ENCODE measurements at regions of chr7 and their contacts with region 1.

Region 1: DNA sequence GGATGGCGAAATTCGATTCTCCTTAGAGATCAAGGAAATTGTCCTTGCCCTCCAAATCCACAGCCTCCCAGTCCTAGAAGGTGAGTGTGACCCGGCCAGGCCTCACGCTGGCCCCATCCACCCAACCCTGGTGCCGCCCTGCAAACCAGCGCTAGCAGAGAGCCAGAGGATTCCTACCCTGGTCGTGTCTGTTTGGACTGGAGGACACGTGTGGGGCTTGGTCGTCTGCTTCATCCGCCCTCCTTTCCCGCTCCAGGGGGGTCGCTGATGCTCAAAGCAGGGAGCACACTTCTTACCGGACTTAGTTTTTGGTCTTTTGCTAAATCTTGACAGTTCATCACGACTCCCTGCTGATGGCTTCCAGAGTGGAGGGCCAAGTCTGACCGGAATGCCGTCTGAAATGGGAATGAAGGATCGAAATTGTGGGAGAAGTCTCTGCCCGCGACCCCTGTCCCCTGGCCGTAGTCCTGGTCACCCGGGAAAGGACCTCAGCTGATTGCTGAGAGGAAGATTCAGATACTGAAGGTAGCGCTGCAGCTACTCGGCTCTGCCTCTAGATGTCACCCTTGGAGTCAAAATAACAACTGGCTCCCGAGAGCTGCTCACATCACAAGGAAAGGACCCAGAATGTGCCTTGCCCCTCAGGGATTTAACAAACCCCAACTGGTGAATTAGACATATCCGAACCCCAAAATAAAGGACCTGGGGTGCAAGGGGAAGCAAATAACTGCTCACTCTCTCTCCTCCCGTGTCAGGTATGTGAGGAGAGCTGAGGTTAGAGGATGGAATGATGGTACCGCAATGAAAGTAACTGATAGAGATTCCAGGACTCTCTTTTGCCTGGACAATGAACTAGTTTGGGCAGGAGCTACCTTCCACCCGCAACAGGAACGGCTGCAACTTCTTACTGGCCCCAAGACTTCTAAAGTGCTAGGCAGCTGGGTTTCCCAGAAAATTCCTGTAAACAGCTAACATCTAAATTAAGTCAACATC is 23.5 kb upstream of the ORC5 start:
- DNase-seq: peak; percentile 61
- H3K4me3 ChIP-seq: no peak overlapping the region
- H3K4me3 Mint-ChIP-seq: no peak overlapping the region
- H3K27ac Mint-ChIP-seq: no peak overlapping the region
- H3K4me1 ChIP-seq: peaks cover 15% of the 10 kb centered on the region
- H3K4me1 Mint-ChIP-seq: peaks cover 16% of the 10 kb centered on the region
- H3K27me3 ChIP-seq: no peaks in the 10 kb centered on the region
- H3K27me3 Mint-ChIP-seq: no peaks in the 10 kb centered on the region
- CTCF ChIP-seq: peak; percentile 84 to 91

Region 2: DNA sequence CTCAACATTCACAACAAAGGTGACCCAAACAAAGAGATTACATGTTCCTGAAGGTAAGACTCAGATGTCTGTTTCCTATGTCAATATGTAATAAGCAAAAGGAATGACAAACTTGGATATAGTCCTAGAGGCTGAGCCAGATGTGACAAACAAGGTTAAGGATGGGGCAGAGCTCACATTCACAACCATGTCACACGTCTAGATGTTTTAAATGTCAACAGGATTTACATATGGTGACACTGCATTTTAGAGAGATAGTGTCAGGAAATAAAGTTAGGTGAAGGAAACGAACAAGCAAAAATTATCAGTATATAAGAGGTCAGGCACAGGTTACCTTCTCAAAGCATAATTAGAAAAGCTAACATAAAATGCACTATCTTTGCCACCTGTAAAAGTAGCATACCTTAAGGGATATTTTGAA is 250.3 kb before region 1 on chr7:
- CTCF ChIA-PET with region 1: no interaction called
- POLR2A ChIA-PET with region 1: no interaction called
- intact Hi-C with region 1: no loop called
- DNase-seq: no peak
- H3K4me3 ChIP-seq: no peak overlapping the region
- H3K4me3 Mint-ChIP-seq: no peak overlapping the region
- H3K27ac Mint-ChIP-seq: no peak overlapping the region
- H3K4me1 ChIP-seq: no peaks in the 10 kb centered on the region
- H3K4me1 Mint-ChIP-seq: no peaks in the 10 kb centered on the region
- H3K27me3 ChIP-seq: no peaks in the 10 kb centered on the region
- H3K27me3 Mint-ChIP-seq: no peaks in the 10 kb centered on the region
- CTCF ChIP-seq: no peak

Region 3: GRCh38 chr7:104252404-104253134 is 21.2 kb after region 1 on chr7:
- CTCF ChIA-PET with region 1: interaction called, 24 read pairs
- POLR2A ChIA-PET with region 1: no interaction called
- intact Hi-C with region 1: loop called (anchors 2 kb)
- DNase-seq: peak in 1 of 2 experiments; percentile 52
- H3K4me3 ChIP-seq: no peak overlapping the region
- H3K4me3 Mint-ChIP-seq: no peak overlapping the region
- H3K27ac Mint-ChIP-seq: no peak overlapping the region
- H3K4me1 ChIP-seq: no peaks in the 10 kb centered on the region
- H3K4me1 Mint-ChIP-seq: no peaks in the 10 kb centered on the region
- H3K27me3 ChIP-seq: no peaks in the 10 kb centered on the region
- H3K27me3 Mint-ChIP-seq: peaks cover 7% of the 10 kb centered on the region
- CTCF ChIP-seq: peak; percentile 40 to 53

Region 4: GRCh38 chr7:104267701-104268368 is 36.5 kb after region 1 on chr7:
- CTCF ChIA-PET with region 1: interaction called, 10 read pairs
- POLR2A ChIA-PET with region 1: no interaction called
- intact Hi-C with region 1: no loop called
- DNase-seq: no peak
- H3K4me3 ChIP-seq: no peak overlapping the region
- H3K4me3 Mint-ChIP-seq: no peak overlapping the region
- H3K27ac Mint-ChIP-seq: no peak overlapping the region
- H3K4me1 ChIP-seq: no peaks in the 10 kb centered on the region
- H3K4me1 Mint-ChIP-seq: no peaks in the 10 kb centered on the region
- H3K27me3 ChIP-seq: no peaks in the 10 kb centered on the region
- H3K27me3 Mint-ChIP-seq: peaks cover 9% of the 10 kb centered on the region
- CTCF ChIP-seq: peak in 1 of 2 experiments; percentile 19

Region 5: GRCh38 chr7:104415700-104416099 is 184.3 kb after region 1 on chr7:
- CTCF ChIA-PET with region 1: interaction called, 3 read pairs
- POLR2A ChIA-PET with region 1: no interaction called
- intact Hi-C with region 1: loop called (anchors 2 kb)
- DNase-seq: peak in 1 of 2 experiments; percentile 14
- H3K4me3 ChIP-seq: no peak overlapping the region
- H3K4me3 Mint-ChIP-seq: no peak overlapping the region
- H3K27ac Mint-ChIP-seq: no peak overlapping the region
- H3K4me1 ChIP-seq: no peaks in the 10 kb centered on the region
- H3K4me1 Mint-ChIP-seq: no peaks in the 10 kb centered on the region
- H3K27me3 ChIP-seq: no peaks in the 10 kb centered on the region
- H3K27me3 Mint-ChIP-seq: peaks cover 5% of the 10 kb centered on the region
- CTCF ChIP-seq: peak in 1 of 2 experiments; percentile 30